AG04449 (cell line): ENCODE measurements at regions of chr15 and their contacts with region 1.

Region 1: GRCh38 chr15:94119923-94120775 is 111.2 kb upstream of the MCTP2 start:
- DNase-seq: peak; percentile 73
- H3K4me3 ChIP-seq: no peak overlapping the region
- CTCF ChIP-seq: peak; percentile 94

Region 2: DNA sequence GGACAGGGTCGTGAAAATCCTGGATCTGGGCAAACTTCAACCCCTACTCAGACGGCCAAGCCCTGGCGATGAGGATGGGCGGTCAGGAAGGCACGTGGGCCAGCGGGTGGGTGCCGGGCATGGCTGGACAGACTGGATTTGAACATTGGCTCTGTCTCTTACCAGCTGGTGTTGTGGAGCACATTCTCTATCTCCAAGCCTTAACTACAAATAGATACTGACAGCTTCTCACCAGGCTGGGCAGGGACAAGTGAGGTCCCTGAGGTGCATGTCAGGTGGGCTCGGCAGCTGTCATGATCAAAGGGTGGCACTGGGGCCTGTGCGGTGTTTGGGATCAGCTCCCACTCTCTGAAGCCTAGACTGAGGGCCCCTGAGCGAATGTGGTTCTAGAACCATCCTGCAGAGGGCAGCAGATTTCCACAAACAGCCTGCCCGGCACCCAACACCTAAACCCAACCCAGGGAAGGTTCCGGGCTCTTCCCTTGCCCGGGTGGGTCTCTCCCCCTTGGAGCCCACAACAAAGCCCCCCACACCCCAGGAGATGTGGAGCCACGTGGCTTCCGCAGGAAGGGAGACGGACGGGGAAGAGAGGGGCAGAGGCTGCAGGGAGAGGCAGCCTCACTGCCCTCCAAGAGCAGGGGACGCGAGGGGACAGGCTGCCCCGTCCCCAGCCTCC is 1089.6 kb before region 1 on chr15:
- CTCF ChIA-PET with region 1: interaction called, 184 read pairs
- POLR2A ChIA-PET with region 1: interaction called, 4 read pairs
- DNase-seq: no peak
- H3K4me3 ChIP-seq: no peak overlapping the region
- CTCF ChIP-seq: peak; percentile 79

Region 3: DNA sequence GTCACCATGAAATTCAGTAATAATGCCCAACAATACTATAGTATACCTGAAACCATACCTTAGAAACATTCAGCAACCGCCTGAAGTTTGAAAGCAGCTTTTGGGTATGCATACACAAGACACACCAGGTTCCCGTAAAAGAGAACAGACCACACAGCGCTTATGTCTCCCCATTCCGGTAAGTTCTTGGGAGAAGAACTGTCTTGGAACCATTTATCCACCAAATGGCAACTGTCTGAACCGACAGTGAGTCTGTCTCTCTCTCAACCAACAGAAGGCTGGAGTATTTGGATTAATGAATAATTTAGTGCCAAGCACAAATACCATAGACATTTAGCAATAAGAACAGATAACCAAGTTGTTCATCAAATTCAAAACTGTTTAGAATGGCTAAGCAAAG is 1038.8 kb before region 1 on chr15:
- CTCF ChIA-PET with region 1: interaction called, 12 read pairs
- POLR2A ChIA-PET with region 1: no interaction called
- DNase-seq: no peak
- H3K4me3 ChIP-seq: no peak overlapping the region
- CTCF ChIP-seq: no peak

Region 4: DNA sequence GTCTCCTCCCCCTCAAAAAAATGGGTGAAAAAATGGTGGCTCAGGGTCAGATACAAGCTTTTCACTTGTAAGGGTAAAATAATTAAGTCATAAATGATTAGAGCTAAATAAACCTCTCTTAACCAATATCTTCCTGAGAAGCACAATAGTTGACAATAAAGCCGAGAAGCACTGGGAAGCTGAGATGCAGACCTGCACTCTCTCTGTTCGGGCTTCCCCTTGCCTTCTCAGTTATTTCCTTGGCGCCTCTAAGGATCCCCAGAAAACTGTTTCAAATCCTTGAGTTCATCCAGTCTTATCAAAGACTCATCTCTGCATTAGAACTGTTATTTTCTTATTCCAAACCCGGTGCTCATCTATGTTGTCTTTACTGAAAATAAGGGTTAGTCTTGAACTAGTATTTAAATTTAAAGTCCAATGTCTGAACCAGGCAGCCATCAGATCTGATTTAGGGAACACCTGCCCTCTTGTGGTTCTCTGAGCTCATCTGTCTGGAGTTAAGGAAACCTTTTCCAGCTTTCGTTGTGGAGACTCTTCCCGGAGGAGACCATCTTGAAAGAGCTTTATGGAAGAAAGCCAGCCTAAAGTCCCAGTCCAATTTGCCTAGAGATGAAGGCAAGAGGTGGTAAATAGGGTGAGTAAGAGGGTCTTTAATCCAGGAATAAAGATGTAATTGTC is 145.2 kb before region 1 on chr15:
- CTCF ChIA-PET with region 1: interaction called, 67 read pairs
- POLR2A ChIA-PET with region 1: interaction called, 3 read pairs
- DNase-seq: no peak
- H3K4me3 ChIP-seq: no peak overlapping the region
- CTCF ChIP-seq: peak; percentile 54

Region 5: DNA sequence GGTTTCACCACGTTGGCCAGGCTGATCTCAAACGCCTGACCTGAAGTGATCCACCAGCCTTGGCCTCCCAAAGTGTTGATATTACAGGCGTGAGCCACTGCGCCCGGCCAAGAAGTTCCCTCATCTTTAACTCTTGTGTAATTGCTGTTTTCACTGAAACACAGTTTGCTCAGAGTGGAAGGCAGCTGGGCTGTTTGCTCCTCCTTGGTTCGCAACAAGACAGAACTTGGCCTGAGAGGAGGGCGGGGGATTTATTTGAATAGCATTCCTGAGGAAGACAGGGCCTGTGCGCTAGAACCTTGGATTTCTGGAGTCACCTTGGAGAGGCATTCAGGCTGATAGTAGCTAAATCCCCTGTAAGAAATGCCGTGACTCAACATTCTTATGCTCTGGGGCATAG is 115.5 kb before region 1 on chr15:
- CTCF ChIA-PET with region 1: interaction called, 143 read pairs
- POLR2A ChIA-PET with region 1: no interaction called
- DNase-seq: no peak
- H3K4me3 ChIP-seq: no peak overlapping the region
- CTCF ChIP-seq: no peak

Region 6: DNA sequence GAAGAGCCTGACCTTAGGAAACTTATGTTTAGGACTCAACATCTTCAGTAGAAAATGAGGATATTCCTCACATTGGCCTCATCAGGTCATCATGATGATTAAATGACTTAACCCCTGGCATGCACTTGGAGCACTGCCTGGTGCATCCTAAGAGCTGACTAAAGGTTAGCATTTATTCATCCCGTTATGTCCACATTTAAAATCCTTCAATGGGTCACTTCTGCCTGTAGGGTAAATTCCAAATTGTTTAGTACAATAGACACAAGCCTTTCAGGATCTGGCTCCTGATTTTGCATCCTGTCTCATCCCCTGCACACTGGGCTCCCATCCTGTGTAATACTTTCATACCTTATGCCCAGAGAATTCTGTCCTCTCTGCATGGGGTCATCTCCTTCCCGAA is 84.0 kb before region 1 on chr15:
- CTCF ChIA-PET with region 1: interaction called, 16 read pairs
- POLR2A ChIA-PET with region 1: no interaction called
- DNase-seq: no peak
- H3K4me3 ChIP-seq: no peak overlapping the region
- CTCF ChIP-seq: no peak

Region 7: DNA sequence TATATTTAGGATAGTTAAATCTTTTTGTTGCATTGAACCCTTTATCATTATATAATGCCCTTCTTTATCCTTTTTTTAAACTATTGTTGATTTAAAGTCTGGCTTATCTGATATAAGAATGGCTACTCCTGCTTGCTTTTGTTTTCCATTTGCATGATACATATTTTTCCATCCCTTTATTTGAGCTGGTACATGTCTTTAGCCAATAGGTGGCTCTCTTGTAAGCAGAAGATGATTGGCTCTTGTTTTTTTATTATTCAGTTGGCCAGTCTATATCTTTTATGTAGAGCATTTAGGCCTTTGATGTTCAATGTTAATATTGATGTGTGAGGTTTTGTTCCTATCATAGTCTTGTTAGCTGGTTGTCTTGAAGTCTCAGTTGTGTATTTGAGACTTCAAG is 11.7 kb after region 1 on chr15:
- CTCF ChIA-PET with region 1: interaction called, 13 read pairs
- POLR2A ChIA-PET with region 1: no interaction called
- DNase-seq: no peak
- H3K4me3 ChIP-seq: no peak overlapping the region
- CTCF ChIP-seq: no peak